ENCODE measurements at regions of chr6 and their contacts with region 1.

Region 1: GRCh38 chr6:155327326-155328073 is 13.2 kb upstream of the TFB1M start:
- DNase-seq: peak; percentile 86
- ATAC-seq: no peak
- H3K4me3 ChIP-seq: peak overlapping the region; percentile 77 to 88 (median 82)
- H3K27ac ChIP-seq: peak overlapping the region; percentile 100
- H3K4me1 ChIP-seq: peaks cover 68% of the 10 kb centered on the region
- H3K27me3 ChIP-seq: no peaks in the 10 kb centered on the region; a peak in 1 of 5 replicates
- CTCF ChIP-seq: peak; percentile 81
- EP300 ChIP-seq: peak in 1 of 2 experiments; percentile 60; a peak in 1 of 4 replicates
- POLR2A ChIP-seq: peak; percentile 58 to 71; a peak in 2 of 4 replicates
- RAD21 ChIP-seq: peak; percentile 88

Region 2: GRCh38 chr6:154474636-154475428 is 852.7 kb before region 1 on chr6:
- CTCF ChIA-PET with region 1: no interaction called
- POLR2A ChIA-PET with region 1: no interaction called
- in situ Hi-C with region 1: no loop called
- intact Hi-C with region 1: no loop called
- DNase-seq: no peak
- ATAC-seq: peak; percentile 19
- H3K4me3 ChIP-seq: no peak overlapping the region
- H3K27ac ChIP-seq: no peak overlapping the region
- H3K4me1 ChIP-seq: peaks cover 6% of the 10 kb centered on the region
- H3K27me3 ChIP-seq: no peaks in the 10 kb centered on the region
- CTCF ChIP-seq: no peak
- EP300 ChIP-seq: no peak
- POLR2A ChIP-seq: no peak
- RAD21 ChIP-seq: no peak

Region 3: GRCh38 chr6:154733012-154733625 is 594.4 kb before region 1 on chr6 and contains the start of gene SCAF8:
- CTCF ChIA-PET with region 1: no interaction called
- POLR2A ChIA-PET with region 1: no interaction called
- in situ Hi-C with region 1: no loop called
- intact Hi-C with region 1: no loop called
- DNase-seq: peak; percentile 73
- ATAC-seq: peak; percentile 85
- H3K4me3 ChIP-seq: peak within 1 kb of the TSS; percentile 75 to 96 (median 81)
- H3K27ac ChIP-seq: peak within 1 kb of the TSS; percentile 99
- H3K4me1 ChIP-seq: peaks cover 48% of the 10 kb centered on the region
- H3K27me3 ChIP-seq: no peaks in the 10 kb centered on the region; a peak in 2 of 5 replicates
- CTCF ChIP-seq: peak; percentile 86
- EP300 ChIP-seq: peak in 1 of 2 experiments; percentile 52; a peak in 3 of 4 replicates
- POLR2A ChIP-seq: peak; percentile 75 to 89
- RAD21 ChIP-seq: peak; percentile 88
- total RNA-seq, gene SCAF8: 40.8 and 47.3 TPM in 2 replicates

Region 4: DNA sequence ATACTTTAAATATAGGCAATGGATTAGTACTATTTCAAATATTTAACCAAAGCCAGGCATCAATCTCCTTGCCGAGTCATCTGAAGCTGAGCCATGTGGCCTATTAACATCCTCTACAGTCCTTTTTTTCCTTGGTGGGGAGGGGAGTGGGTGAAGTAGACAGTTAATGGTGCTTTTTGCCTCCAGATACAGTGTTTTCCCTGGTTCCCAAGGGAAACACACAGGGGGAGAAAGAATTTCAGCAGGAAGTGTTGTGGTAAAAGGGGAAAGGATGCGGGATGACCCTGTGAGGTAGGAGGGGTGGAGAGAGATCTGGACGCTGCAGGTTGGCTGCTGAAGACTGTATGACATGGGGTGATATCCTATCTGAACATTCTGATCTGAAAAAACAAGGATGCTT is 54.1 kb before region 1 on chr6:
- CTCF ChIA-PET with region 1: no interaction called
- POLR2A ChIA-PET with region 1: no interaction called
- in situ Hi-C with region 1: no loop called
- intact Hi-C with region 1: no loop called
- DNase-seq: no peak
- ATAC-seq: no peak
- H3K4me3 ChIP-seq: no peak overlapping the region
- H3K27ac ChIP-seq: no peak overlapping the region
- H3K4me1 ChIP-seq: 0 out of 2 replicates have a peak, but pooled peaks cover 7% of the 10 kb centered on the region
- H3K27me3 ChIP-seq: no peaks in the 10 kb centered on the region
- CTCF ChIP-seq: no peak
- EP300 ChIP-seq: no peak
- POLR2A ChIP-seq: no peak
- RAD21 ChIP-seq: no peak

Region 5: GRCh38 chr6:155314092-155314772 is 13.3 kb before region 1 on chr6 and contains the start of gene TFB1M:
- CTCF ChIA-PET with region 1: no interaction called
- POLR2A ChIA-PET with region 1: interaction called, 155 read pairs
- in situ Hi-C with region 1: no loop called
- intact Hi-C with region 1: loop called (anchors 1 kb)
- DNase-seq: peak; percentile 99
- ATAC-seq: peak; percentile 97
- H3K4me3 ChIP-seq: peak within 1 kb of the TSS; percentile 74 to 97 (median 93)
- H3K27ac ChIP-seq: peak within 1 kb of the TSS; percentile 92
- H3K4me1 ChIP-seq: peaks cover 65% of the 10 kb centered on the region
- H3K27me3 ChIP-seq: no peaks in the 10 kb centered on the region; a peak in 1 of 5 replicates
- CTCF ChIP-seq: no peak; the same call in 1 of the 2 replicates
- EP300 ChIP-seq: no peak; a peak in 1 of 4 replicates
- POLR2A ChIP-seq: peak; percentile 91 to 95
- RAD21 ChIP-seq: peak; percentile 56
- total RNA-seq, gene TFB1M: 122 and 149 TPM in 2 replicates

Region 6: DNA sequence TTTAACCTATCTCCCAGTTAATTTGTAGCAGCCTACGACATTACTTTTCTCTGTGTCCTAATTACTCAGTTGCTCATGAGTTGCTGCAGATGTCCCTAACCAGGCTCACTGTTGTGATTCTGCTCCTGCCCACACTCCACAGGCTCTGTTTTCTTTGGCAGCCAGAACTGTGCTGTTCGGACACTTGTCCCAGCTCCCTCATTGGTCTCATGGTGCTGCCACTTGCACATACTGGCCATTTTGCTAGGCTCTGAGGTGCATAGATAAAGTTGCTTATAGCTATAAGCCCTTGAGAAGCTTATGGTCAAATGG is 73.1 kb after region 1 on chr6:
- CTCF ChIA-PET with region 1: interaction called, 7 read pairs
- POLR2A ChIA-PET with region 1: interaction called, 81 read pairs
- in situ Hi-C with region 1: loop called (anchors 5 kb)
- intact Hi-C with region 1: loop called (anchors 1 kb)
- DNase-seq: no peak
- ATAC-seq: no peak
- H3K4me3 ChIP-seq: no peak overlapping the region
- H3K27ac ChIP-seq: peak overlapping the region; percentile 96
- H3K4me1 ChIP-seq: peaks cover 81% of the 10 kb centered on the region
- H3K27me3 ChIP-seq: no peaks in the 10 kb centered on the region
- CTCF ChIP-seq: no peak
- EP300 ChIP-seq: no peak
- POLR2A ChIP-seq: no peak
- RAD21 ChIP-seq: no peak

Region 7: DNA sequence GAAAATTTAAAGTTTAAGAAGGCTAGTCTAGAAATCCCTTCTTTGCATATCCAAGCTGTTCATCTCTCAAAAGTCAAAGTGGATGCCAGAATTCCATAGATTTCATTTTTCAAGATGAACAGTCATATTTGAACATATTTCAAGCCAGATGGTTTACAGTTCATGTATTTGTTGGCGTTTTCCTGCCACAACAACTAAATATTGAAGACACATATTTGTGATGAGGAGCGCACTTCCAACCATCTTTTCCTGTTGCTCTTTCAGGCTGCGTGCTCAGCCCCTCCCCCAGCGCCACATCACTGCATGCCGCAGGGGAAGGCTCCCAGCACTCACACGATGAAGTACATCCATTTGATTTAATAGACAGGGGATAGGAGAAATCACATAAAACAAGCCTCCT is 134.1 kb after region 1 on chr6:
- CTCF ChIA-PET with region 1: no interaction called
- POLR2A ChIA-PET with region 1: no interaction called
- in situ Hi-C with region 1: no loop called
- intact Hi-C with region 1: no loop called
- DNase-seq: no peak
- ATAC-seq: no peak
- H3K4me3 ChIP-seq: no peak overlapping the region
- H3K27ac ChIP-seq: no peak overlapping the region
- H3K4me1 ChIP-seq: no peaks in the 10 kb centered on the region
- H3K27me3 ChIP-seq: no peaks in the 10 kb centered on the region
- CTCF ChIP-seq: no peak
- EP300 ChIP-seq: no peak
- POLR2A ChIP-seq: no peak
- RAD21 ChIP-seq: no peak

Region 8: GRCh38 chr6:155487371-155488130 is 160.1 kb after region 1 on chr6:
- CTCF ChIA-PET with region 1: interaction called, 5 read pairs
- POLR2A ChIA-PET with region 1: interaction called, 107 read pairs
- in situ Hi-C with region 1: no loop called
- intact Hi-C with region 1: loop called (anchors 1 kb)
- DNase-seq: peak; percentile 52
- ATAC-seq: no peak
- H3K4me3 ChIP-seq: no peak overlapping the region; a peak in 1 of 6 replicates
- H3K27ac ChIP-seq: peak overlapping the region; percentile 84
- H3K4me1 ChIP-seq: peaks cover 96% of the 10 kb centered on the region
- H3K27me3 ChIP-seq: no peaks in the 10 kb centered on the region
- CTCF ChIP-seq: no peak
- EP300 ChIP-seq: peak in 1 of 2 experiments; percentile 56; a peak in 2 of 4 replicates
- POLR2A ChIP-seq: peak in 1 of 2 experiments; percentile 25; a peak in 1 of 4 replicates
- RAD21 ChIP-seq: no peak

Region 9: GRCh38 chr6:155530219-155530834 is 202.8 kb after region 1 on chr6:
- CTCF ChIA-PET with region 1: interaction called, 43 read pairs
- POLR2A ChIA-PET with region 1: interaction called, 76 read pairs
- in situ Hi-C with region 1: loop called (anchors 5 kb)
- intact Hi-C with region 1: loop called (anchors 1 kb)
- DNase-seq: peak; percentile 73
- ATAC-seq: peak; percentile 90
- H3K4me3 ChIP-seq: no peak overlapping the region
- H3K27ac ChIP-seq: peak overlapping the region; percentile 71
- H3K4me1 ChIP-seq: peaks cover 33% of the 10 kb centered on the region
- H3K27me3 ChIP-seq: no peaks in the 10 kb centered on the region
- CTCF ChIP-seq: peak; percentile 86
- EP300 ChIP-seq: no peak
- POLR2A ChIP-seq: no peak
- RAD21 ChIP-seq: peak; percentile 81

Region 10: GRCh38 chr6:155765275-155766194 is 438.0 kb after region 1 on chr6:
- CTCF ChIA-PET with region 1: interaction called, 6 read pairs
- POLR2A ChIA-PET with region 1: no interaction called
- in situ Hi-C with region 1: loop called (anchors 10 kb)
- intact Hi-C with region 1: loop called (anchors 2 kb)
- DNase-seq: peak; percentile 12
- ATAC-seq: no peak
- H3K4me3 ChIP-seq: no peak overlapping the region
- H3K27ac ChIP-seq: no peak overlapping the region
- H3K4me1 ChIP-seq: no peaks in the 10 kb centered on the region
- H3K27me3 ChIP-seq: peaks cover 0 to 3% of the 10 kb centered on the region in 2 experiments; a peak in 1 of 5 replicates
- CTCF ChIP-seq: peak; percentile 44
- EP300 ChIP-seq: no peak
- POLR2A ChIP-seq: no peak
- RAD21 ChIP-seq: no peak